Body of pancreas (tissue), 4 donors: ENCODE measurements at regions of chr3 and their contacts with region 1.

Region 1: DNA sequence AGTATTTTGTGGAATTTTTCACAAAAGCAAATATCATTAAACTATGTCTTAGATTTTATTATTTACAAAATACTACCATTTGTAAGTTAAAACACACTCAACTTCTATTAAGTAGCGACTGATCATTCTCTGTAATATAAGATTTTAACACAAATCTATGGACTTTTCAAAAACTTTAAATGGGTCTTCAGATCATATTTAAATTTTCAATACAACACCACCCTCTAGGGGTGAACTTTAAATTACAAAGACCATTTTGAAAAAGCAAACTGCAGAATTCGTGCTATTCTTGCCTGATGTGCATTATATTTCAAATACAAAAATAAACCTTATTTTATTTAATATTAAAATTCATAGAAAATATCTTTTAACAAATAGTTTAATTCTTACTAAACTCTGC is 8.2 kb upstream of the VGLL4 start:
- DNase-seq: no peak
- ATAC-seq: no peak
- H3K4me3 ChIP-seq: no peak overlapping the region
- H3K27ac ChIP-seq: no peak overlapping the region
- H3K4me1 ChIP-seq: peaks cover 37% of the 10 kb centered on the region
- H3K27me3 ChIP-seq: no peaks in the 10 kb centered on the region
- CTCF ChIP-seq: peak in 6 of 7 experiments; percentile 39 to 75 (median 58)
- POLR2A ChIP-seq: no peak

Region 2: GRCh38 chr3:11271986-11272904 is 379.7 kb before region 1 on chr3 and contains the start of gene ATG7:
- intact Hi-C with region 1: no loop called
- DNase-seq: peak; percentile 97 to 98 (median 98)
- ATAC-seq: peak; percentile 99
- H3K4me3 ChIP-seq: peak within 1 kb of the TSS; percentile 5 to 92
- H3K27ac ChIP-seq: peak within 1 kb of the TSS; percentile 3 to 84 (median 74)
- H3K4me1 ChIP-seq: peaks cover 22% of the 10 kb centered on the region
- H3K27me3 ChIP-seq: no peaks in the 10 kb centered on the region
- CTCF ChIP-seq: peak in 5 of 7 experiments; percentile 11 to 41 (median 23)
- POLR2A ChIP-seq: peak; percentile 59 to 96 (median 94)
- total RNA-seq, gene ATG7: 40.5 to 43.6 TPM

Region 3: GRCh38 chr3:11379824-11380701 is 271.8 kb before region 1 on chr3:
- intact Hi-C with region 1: loop called (anchors 5 kb)
- DNase-seq: no peak
- ATAC-seq: no peak
- H3K4me3 ChIP-seq: no peak overlapping the region
- H3K27ac ChIP-seq: peak overlapping the region; percentile 35 to 78 (median 56)
- H3K4me1 ChIP-seq: peaks cover 40% of the 10 kb centered on the region
- H3K27me3 ChIP-seq: no peaks in the 10 kb centered on the region
- CTCF ChIP-seq: no peak
- POLR2A ChIP-seq: no peak

Region 4: GRCh38 chr3:11523572-11524101 is 128.3 kb before region 1 on chr3:
- intact Hi-C with region 1: no loop called
- DNase-seq: no peak
- ATAC-seq: no peak
- H3K4me3 ChIP-seq: no peak overlapping the region
- H3K27ac ChIP-seq: no peak overlapping the region
- H3K4me1 ChIP-seq: no peaks in the 10 kb centered on the region
- H3K27me3 ChIP-seq: no peaks in the 10 kb centered on the region
- CTCF ChIP-seq: no peak
- POLR2A ChIP-seq: no peak